Sigmoid colon (tissue), 7 donors: ENCODE measurements at regions of chr9 and their contacts with region 1.

Region 1: DNA sequence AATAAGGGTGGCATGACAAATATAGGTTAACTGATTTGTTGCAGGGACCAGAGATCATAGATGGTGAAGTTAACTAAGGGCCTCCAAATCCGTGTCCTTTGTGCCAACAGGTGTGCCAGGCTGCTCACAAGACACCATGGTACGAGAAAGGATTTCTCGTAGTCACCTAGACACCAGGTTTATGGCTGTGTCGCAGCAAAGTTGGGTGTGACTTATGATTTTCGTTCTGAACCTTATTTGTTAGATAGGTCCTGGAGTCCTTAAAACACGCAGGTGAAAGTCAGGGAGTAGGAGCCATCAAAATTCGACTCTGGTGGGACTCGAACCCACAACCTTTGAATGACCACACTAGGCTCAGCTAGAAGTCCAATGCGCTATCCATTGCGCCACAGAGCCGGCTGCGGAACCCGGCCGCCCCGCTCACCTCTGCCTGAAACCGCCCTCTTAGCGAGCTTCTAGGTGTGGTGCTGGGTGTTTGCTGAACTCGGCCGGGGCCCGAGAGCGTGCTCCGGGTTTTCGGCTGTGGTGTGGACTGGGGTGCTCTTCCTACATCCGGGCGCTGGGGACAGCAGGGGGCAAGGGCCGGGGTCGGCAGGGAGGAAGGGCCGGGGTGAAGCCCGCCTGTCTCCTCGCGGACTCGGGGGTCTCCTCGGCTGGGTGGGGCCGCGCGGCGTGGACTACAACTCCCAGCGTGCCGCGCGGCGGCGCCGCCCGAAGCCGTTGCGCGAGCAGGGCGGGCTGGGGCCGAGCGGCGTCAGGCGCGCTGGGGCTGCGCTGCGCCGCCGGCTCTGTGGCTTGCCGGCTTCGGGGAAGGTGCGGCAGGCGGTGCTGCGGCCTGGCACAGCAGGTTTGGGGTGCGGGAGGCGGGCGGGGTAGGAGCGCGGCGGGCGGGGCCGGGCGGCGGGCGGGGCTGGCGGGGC is at the start of gene SLC27A4:
- DNase-seq: peak; percentile 80
- H3K4me3 ChIP-seq: peak within 1 kb of the TSS; percentile 69 to 91 (median 86)
- H3K27ac ChIP-seq: peak within 1 kb of the TSS; percentile 85 to 86 (median 85)
- H3K4me1 ChIP-seq: peaks cover 0 to 18% (median 14%) of the 10 kb centered on the region in 4 donors
- H3K27me3 ChIP-seq: no peaks in the 10 kb centered on the region
- CTCF ChIP-seq: no peak
- EP300 ChIP-seq: no peak
- POLR2A ChIP-seq: no peak
- total RNA-seq, gene SLC27A4: 10.7 to 18.0 (median 12.0) TPM

Region 2: DNA sequence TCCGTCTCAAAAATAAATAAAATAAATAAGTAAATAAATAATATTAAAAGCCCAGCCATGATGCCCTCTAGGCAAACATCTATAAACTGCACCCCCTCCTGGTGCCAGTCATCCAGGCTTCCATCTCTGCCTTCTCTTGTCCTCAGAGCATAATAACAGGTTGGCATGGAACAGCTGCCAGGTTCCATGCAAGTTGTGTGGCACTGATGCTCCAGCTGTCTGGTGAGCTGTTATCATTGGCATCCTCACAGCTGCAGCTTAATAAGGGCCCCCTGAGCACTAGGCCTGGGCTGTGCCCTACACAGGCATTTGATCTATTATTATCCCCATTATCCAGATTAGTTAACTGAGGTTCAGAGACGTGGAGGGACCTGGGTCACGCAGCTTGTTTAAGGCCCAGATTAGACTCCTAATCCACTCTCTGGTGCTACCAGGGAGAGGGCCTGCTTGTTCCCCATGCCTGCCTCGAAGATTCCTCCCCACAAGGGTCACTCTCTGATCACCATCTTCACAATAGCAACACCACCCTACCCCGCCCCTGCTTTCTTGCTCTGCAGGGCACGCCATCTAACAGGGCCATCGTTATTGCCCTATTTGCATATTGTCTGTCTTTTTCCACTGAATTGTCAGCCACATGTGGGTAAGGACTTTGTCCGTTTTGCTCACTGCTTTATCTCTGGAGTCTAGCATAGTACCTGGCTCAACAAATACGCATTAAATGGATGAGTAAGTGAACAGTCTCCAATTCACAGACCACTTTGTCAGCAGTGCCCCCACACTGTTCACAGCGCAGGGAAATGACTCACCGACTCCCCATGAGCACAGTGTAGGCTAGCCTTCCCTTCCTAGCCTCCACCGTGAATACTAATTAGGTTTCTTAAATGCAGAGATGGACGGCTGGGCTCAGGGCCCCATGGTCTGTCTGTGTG is 138.3 kb before region 1 on chr9:
- intact Hi-C with region 1: no loop called
- DNase-seq: no peak
- H3K4me3 ChIP-seq: no peak overlapping the region
- H3K27ac ChIP-seq: no peak overlapping the region
- H3K4me1 ChIP-seq: peaks cover 0 to 15% (median 13%) of the 10 kb centered on the region in 4 donors
- H3K27me3 ChIP-seq: peaks cover 6 to 15% (median 12%) of the 10 kb centered on the region in 3 donors
- CTCF ChIP-seq: no peak
- EP300 ChIP-seq: no peak
- POLR2A ChIP-seq: no peak

Region 3: DNA sequence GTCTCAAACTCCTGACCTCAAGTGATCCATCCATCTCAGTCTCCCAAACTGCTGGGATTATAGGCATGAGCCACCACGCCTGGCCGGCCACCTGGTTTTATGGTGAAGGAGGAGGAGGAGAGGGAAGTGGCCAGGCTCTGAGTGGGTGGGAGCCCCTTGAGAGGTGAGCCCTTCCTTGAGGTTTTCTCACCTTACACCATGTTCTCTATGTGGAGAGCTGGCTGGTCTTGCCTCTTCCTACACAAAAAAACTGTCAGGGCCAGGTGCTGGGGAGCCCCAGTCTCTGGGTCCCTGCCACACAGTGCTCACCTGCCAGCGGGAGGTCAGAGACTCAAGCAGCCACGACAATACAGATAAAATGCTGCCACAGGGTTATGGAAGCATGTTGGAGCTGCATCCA is 45.9 kb before region 1 on chr9:
- intact Hi-C with region 1: loop called (anchors 2 kb)
- DNase-seq: no peak
- H3K4me3 ChIP-seq: no peak overlapping the region
- H3K27ac ChIP-seq: no peak overlapping the region
- H3K4me1 ChIP-seq: no peaks in the 10 kb centered on the region
- H3K27me3 ChIP-seq: no peaks in the 10 kb centered on the region
- CTCF ChIP-seq: no peak
- EP300 ChIP-seq: no peak
- POLR2A ChIP-seq: no peak

Region 4: DNA sequence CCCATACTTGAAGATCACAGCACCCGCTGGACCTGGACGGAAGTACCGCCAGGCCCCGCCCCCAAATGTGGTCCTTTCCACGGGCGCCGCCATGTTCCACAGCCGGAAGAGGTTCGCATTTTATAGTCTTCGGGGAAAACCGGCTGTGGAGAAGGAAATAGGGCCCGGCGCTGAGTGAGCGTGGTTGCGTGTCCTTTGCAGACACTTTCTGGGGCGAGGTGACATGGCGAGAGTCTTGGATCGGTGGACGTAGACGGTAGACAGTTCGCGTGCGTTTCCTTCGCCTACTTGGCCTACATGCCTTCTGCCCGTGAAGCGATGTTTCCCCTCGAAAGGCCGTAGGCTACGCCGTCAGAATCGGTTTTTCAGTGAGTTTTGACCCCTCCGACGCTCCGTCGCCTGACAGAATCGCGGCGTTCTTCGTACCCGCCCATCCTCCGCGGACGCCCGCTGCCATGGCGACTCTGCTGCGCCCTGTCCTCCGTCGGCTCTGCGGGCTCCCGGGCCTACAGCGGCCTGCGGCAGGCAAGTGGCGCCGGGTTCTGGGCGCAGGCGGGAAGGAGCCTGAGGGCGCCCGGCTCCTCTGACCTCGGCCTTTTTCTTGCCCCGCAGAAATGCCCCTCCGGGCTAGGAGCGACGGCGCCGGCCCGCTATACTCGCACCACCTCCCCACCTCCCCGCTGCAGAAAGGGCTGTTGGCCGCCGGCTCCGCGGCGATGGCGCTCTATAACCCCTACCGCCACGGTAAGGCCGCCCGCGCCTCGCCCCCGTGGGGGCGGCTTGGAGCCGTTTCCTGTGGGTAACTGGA is 17.4 kb before region 1 on chr9 and contains the starts of genes COQ4 and TRUB2:
- intact Hi-C with region 1: loop called (anchors 2 kb)
- DNase-seq: peak; percentile 97
- H3K4me3 ChIP-seq: peak within 1 kb of the TSS; percentile 63 to 97 (median 86)
- H3K27ac ChIP-seq: peak within 1 kb of the TSS; percentile 85 to 90 (median 88)
- H3K4me1 ChIP-seq: peaks cover 0 to 27% (median 25%) of the 10 kb centered on the region in 4 donors
- H3K27me3 ChIP-seq: no peaks in the 10 kb centered on the region
- CTCF ChIP-seq: no peak
- EP300 ChIP-seq: no peak
- POLR2A ChIP-seq: no peak
- total RNA-seq, gene COQ4: 26.4 to 60.7 (median 29.7) TPM
- total RNA-seq, gene TRUB2: 7.6 to 14.1 (median 9.1) TPM

Region 5: GRCh38 chr9:128370826-128371621 is 31.0 kb after region 1 on chr9 and contains the start of gene URM1:
- intact Hi-C with region 1: loop called (anchors 2 kb)
- DNase-seq: peak; percentile 97
- H3K4me3 ChIP-seq: peak within 1 kb of the TSS; percentile 52 to 75 (median 72)
- H3K27ac ChIP-seq: peak within 1 kb of the TSS; percentile 88 to 95 (median 94)
- H3K4me1 ChIP-seq: peaks cover 0 to 32% (median 23%) of the 10 kb centered on the region in 4 donors
- H3K27me3 ChIP-seq: no peaks in the 10 kb centered on the region
- CTCF ChIP-seq: no peak
- EP300 ChIP-seq: no peak
- POLR2A ChIP-seq: peak; percentile 91 to 95
- total RNA-seq, gene URM1: 16.3 to 25.1 (median 20.4) TPM